AG04449 (cell line): ENCODE measurements at regions of chr6 and their contacts with region 1.

Region 1: GRCh38 chr6:136226027-136226673 is 24.0 kb downstream of the MTFR2 start:
- DNase-seq: no peak
- H3K4me3 ChIP-seq: no peak overlapping the region
- CTCF ChIP-seq: peak; percentile 88

Region 2: GRCh38 chr6:135451693-135452092 is 774.5 kb before region 1 on chr6:
- CTCF ChIA-PET with region 1: interaction called, 36 read pairs
- POLR2A ChIA-PET with region 1: no interaction called
- DNase-seq: no peak
- H3K4me3 ChIP-seq: no peak overlapping the region
- CTCF ChIP-seq: peak; percentile 14

Region 3: GRCh38 chr6:135506270-135506997 is 719.7 kb before region 1 on chr6:
- CTCF ChIA-PET with region 1: interaction called, 57 read pairs
- POLR2A ChIA-PET with region 1: no interaction called
- DNase-seq: no peak
- H3K4me3 ChIP-seq: no peak overlapping the region
- CTCF ChIP-seq: peak; percentile 53

Region 4: GRCh38 chr6:135851442-135852271 is 374.5 kb before region 1 on chr6 and contains the start of gene PDE7B:
- CTCF ChIA-PET with region 1: interaction called, 23 read pairs
- POLR2A ChIA-PET with region 1: no interaction called
- DNase-seq: peak; percentile 97
- H3K4me3 ChIP-seq: peak within 1 kb of the TSS; percentile 66
- CTCF ChIP-seq: no peak

Region 5: DNA sequence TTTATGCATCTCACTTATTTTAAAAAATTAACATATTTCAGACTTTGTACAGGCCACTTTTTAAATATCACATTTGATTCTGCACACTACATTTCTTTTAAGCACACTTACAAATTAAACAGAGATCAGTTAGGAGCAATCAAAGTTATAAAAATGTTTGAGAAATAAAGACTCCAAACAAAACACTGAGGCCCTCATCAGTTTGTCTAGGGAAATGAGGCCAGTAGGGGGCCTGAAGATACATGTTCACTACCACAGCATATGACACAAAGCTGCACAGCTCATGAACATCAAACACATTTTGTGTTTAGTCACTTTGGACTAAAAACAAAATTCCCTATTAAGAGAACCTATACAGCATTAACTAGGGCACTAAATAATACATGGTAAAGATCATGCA is 194.2 kb before region 1 on chr6:
- CTCF ChIA-PET with region 1: interaction called, 26 read pairs
- POLR2A ChIA-PET with region 1: no interaction called
- DNase-seq: no peak
- H3K4me3 ChIP-seq: no peak overlapping the region
- CTCF ChIP-seq: peak; percentile 59

Region 6: DNA sequence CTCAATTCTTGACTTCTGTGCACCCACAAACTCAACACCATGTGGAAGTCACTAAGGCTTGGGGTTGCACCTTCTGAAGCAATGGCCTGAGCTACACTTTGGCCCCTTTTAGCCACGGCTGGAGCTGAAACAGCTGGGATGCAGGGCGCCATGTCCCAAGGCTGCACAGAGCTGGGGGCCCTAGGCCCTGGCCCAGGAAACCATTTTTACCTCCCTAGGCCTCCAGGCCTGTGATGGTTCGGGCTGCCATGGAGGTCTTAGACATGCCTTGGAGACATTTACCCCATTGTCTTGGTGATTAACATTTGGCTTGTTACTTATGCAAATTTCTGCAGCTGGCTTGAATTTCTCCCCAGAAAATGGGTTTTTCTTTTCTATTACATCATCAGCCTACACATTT is 62.9 kb before region 1 on chr6:
- CTCF ChIA-PET with region 1: no interaction called
- POLR2A ChIA-PET with region 1: no interaction called
- DNase-seq: no peak
- H3K4me3 ChIP-seq: no peak overlapping the region
- CTCF ChIP-seq: no peak

Region 7: GRCh38 chr6:136208783-136209182 is 17.4 kb before region 1 on chr6:
- CTCF ChIA-PET with region 1: interaction called, 13 read pairs
- POLR2A ChIA-PET with region 1: no interaction called
- DNase-seq: no peak
- H3K4me3 ChIP-seq: no peak overlapping the region
- CTCF ChIP-seq: no peak

Region 8: GRCh38 chr6:137033828-137034227 is 807.7 kb after region 1 on chr6:
- CTCF ChIA-PET with region 1: no interaction called
- POLR2A ChIA-PET with region 1: no interaction called
- DNase-seq: no peak
- H3K4me3 ChIP-seq: no peak overlapping the region
- CTCF ChIP-seq: no peak